Right ventricle myocardium superior (tissue), 1 donor: ENCODE measurements at regions of chr3 and their contacts with region 1.

Region 1: GRCh38 chr3:170811928-170812591 is 57.9 kb downstream of the RPL22L1 start:
- DNase-seq: peak; percentile 50
- ATAC-seq: peak; percentile 82

Region 2: GRCh38 chr3:170414202-170414663 is 397.8 kb before region 1 on chr3:
- intact Hi-C with region 1: loop called (anchors 5 kb)
- DNase-seq: no peak
- ATAC-seq: peak; percentile 81

Region 3: DNA sequence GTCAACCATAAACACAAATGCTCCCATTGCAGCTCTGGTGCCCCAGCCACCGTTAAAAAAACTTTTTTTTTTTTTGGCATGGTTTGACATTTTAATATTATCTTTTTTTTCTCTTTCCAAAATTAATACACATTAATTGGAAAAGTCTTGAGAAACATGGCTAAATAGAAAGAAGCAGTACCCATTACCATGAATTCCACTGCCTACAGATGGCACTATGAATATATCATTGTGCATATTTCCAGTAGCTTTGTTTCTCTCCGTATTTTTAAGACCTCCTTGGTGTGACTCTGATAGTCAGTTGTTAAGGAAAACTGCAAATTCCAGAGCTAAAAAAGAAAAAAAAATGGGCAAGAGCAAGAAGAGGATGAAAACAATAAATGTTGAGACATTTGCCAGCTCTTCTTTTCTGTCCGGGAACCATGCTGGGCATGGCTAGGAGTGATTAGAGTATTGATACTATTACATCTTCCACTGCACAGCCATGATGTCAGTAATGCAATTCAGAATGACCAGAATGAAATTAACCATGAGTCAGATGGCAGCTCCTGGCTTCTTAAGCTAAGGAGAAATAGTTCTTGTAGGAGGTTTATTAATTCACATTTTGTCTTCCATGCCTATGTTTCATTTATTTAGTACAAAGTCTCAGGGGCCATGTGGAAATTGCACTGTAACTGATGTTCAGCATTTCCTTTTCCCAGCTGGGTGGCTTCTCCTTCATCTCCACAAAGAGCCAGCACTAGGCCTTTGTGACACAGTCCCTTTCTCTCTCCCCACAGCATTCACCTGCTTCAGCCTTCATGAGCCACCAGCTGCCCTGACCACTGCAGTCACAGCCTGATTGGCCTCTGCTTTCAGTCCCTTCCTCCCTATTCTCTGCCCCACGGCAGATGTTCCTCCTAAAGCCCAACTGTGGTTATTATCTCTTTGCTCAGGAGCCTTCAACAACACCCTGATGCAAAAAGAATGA is 258.0 kb before region 1 on chr3:
- intact Hi-C with region 1: loop called (anchors 5 kb)
- DNase-seq: no peak
- ATAC-seq: no peak

Region 4: DNA sequence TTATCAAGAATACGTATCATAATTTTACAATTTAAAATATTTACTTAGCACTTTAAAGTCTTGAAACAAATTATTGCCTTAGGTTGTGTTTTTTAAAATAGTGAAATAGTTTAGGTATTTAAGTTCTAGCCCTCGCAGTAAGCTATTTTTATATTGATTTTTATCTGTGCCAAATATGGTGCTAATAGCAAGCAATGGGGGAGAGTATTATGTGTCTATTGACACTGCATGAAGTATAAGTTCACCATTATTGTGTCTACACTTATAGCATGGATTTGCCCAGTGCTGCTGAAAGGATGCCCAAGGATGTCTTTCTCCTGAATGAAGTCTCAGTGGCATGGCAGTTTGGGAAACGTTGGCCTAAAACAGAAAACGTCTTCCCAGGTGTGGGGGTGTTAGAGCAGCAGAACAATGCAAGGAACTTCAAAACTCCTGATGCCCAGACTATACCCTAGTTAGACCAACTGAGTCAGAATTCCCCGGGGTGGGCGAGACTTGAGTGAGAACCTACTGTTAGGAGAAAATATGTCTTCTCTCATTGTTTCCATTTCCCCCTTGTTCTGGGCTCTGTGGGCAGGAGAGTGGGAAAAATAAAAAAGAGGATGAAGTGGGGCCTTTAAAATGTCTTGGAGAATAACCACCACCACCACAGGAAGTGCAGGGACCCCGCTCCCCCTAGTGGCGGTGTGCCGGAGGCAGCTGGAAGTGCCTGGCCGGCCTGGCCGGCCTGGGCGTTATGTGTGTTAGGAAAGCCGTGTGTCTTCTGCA is 122.0 kb before region 1 on chr3:
- intact Hi-C with region 1: loop called (anchors 10 kb)
- DNase-seq: peak; percentile 77
- ATAC-seq: peak; percentile 94